Heart right ventricle (tissue), 16 donors: ENCODE measurements at regions of chr22 and their contacts with region 1.

Region 1: GRCh38 chr22:49160261-49160999 is 667.2 kb downstream of the BRD1 start:
- DNase-seq: no peak
- ATAC-seq: peak in 1 of 8 donors; percentile 14
- H3K4me3 ChIP-seq: no peak overlapping the region
- H3K27ac ChIP-seq: no peak overlapping the region
- H3K4me1 ChIP-seq: no peaks in the 10 kb centered on the region
- H3K27me3 ChIP-seq: peaks cover 0 to 49% (median 25%) of the 10 kb centered on the region in 7 donors
- CTCF ChIP-seq: no peak

Region 2: GRCh38 chr22:48919187-48919590 is 241.2 kb before region 1 on chr22:
- intact Hi-C with region 1: no loop called
- DNase-seq: no peak
- ATAC-seq: no peak
- H3K4me3 ChIP-seq: no peak overlapping the region
- H3K27ac ChIP-seq: no peak overlapping the region
- H3K4me1 ChIP-seq: no peaks in the 10 kb centered on the region
- H3K27me3 ChIP-seq: peaks cover 4 to 60% (median 48%) of the 10 kb centered on the region in 7 donors
- CTCF ChIP-seq: no peak

Region 3: GRCh38 chr22:49244466-49245420 is 84.3 kb after region 1 on chr22:
- intact Hi-C with region 1: loop called in 1 of 10 experiments (anchors 10 kb)
- DNase-seq: no peak
- ATAC-seq: no peak
- H3K4me3 ChIP-seq: no peak overlapping the region
- H3K27ac ChIP-seq: no peak overlapping the region
- H3K4me1 ChIP-seq: no peaks in the 10 kb centered on the region
- H3K27me3 ChIP-seq: peaks cover 0 to 13% (median 0%) of the 10 kb centered on the region in 7 donors
- CTCF ChIP-seq: no peak